Activated T-helper 2 cell treated with anti-CD3 and anti-CD28 coated beads, Interferon-gamma antibody, Interleukin-2, Interleukin-4, amounts not matched to agents 10 μg/mL and 5 μg/mL and 100 μg/mL, durations not matched to agents 14 hours and 24 hours and 36 hours (primary cell): ENCODE measurements at regions of chr1 and their contacts with region 1.

Region 1: GRCh38 chr1:46340404-46341221 is at the start of gene NSUN4:
- DNase-seq: peak; percentile 81
- H3K4me3 Mint-ChIP-seq: peak within 1 kb of the TSS; percentile 100
- H3K27ac Mint-ChIP-seq: peak within 1 kb of the TSS; percentile 99
- H3K4me1 Mint-ChIP-seq: peaks cover 32% of the 10 kb centered on the region
- H3K27me3 Mint-ChIP-seq: no peaks in the 10 kb centered on the region
- total RNA-seq, gene NSUN4: 37.2 and 37.6 TPM in 2 replicates

Region 2: DNA sequence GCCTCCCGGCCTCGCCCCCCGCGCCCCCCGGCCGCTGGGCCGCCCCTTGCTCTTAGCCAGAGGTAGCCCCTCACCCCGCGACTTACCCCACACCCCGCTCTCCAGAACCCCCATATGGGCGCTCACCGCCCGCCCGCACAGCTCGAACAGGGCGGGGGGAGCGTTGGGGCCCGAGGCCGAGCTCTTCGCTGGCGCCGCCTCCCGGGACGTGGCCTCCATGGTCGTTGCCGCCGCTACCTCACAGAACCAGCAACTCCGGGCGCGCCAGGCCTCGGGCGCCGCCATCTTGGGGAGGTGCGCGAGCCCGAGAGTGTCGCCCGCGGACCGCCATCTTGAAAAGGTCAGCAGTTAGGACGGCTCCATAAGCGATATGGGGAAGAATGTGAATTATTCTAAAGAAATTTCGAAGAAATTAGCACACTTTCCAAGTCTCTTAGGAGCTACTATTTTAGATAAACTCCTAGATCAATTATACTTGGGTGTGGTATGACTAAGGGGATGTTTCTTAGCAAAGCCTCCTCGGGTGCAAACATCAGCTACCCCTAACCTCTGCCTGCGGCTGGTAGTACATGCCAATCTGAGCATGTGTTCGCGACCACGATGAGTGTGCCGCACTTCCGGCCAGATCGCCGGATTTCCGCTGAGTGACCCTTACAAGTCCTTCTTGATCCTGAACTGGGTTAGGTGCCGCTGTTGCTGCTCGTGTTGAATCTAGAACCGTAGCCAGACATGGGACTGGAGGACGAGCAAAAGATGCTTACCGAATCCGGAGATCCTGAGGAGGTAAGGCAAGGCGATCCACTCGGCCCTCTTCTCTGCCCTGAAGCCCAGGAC is 37.4 kb before region 1 on chr1 and contains the starts of genes LRRC41 and UQCRH:
- intact Hi-C with region 1: loop called (anchors 1 kb)
- DNase-seq: peak; percentile 92
- H3K4me3 Mint-ChIP-seq: peak within 1 kb of the TSS; percentile 99
- H3K27ac Mint-ChIP-seq: peak within 1 kb of the TSS; percentile 97
- H3K4me1 Mint-ChIP-seq: peaks cover 38% of the 10 kb centered on the region
- H3K27me3 Mint-ChIP-seq: no peaks in the 10 kb centered on the region
- total RNA-seq, gene LRRC41: 70.1 and 70.6 TPM in 2 replicates
- total RNA-seq, gene UQCRH: 262 and 275 TPM in 2 replicates

Region 3: DNA sequence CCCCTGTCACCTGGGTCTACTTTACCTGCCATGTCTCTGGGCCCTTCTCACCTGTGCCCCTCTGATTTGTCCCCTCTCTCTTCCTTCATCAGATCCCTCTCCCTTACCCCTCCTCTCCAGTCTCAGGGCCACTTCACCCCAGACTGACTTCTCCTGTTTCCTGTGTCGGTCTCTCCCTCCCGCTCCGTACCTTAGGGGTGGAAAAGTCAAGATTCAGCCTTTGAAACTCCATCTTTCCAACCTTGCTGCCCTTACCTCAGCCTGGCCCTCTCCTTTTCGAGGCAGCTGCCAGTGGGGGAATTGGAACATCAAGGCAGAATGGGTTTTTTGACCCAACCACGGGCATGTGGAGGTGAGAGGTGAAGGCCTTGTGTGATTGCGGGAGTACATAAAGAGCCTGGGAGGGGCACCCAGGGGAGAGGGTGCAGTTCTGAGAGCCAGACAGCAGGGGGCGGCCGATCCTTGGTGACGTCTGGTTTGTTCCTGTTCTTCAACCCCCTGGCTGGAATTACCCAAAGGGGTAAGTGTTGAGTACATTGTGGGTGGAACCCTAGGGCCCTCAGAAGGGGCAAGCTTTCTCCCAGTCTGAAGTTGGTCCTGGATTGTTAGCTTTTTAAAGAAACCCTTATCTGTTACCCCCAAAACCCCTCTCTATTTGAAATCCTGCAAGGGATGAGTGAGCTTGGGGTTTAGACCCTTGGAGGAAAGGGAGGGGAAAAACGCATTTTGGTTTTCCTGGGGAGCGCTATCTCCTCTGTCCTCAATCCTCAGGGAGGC is 136.7 kb after region 1 on chr1:
- intact Hi-C with region 1: no loop called
- DNase-seq: peak; percentile 64
- H3K4me3 Mint-ChIP-seq: no peak overlapping the region
- H3K27ac Mint-ChIP-seq: no peak overlapping the region
- H3K4me1 Mint-ChIP-seq: no peaks in the 10 kb centered on the region
- H3K27me3 Mint-ChIP-seq: peaks cover 51% of the 10 kb centered on the region

Region 4: GRCh38 chr1:47211796-47212269 is 871.2 kb after region 1 on chr1:
- intact Hi-C with region 1: no loop called
- DNase-seq: no peak
- H3K4me3 Mint-ChIP-seq: no peak overlapping the region
- H3K27ac Mint-ChIP-seq: peak overlapping the region; percentile 58
- H3K4me1 Mint-ChIP-seq: peaks cover 1% of the 10 kb centered on the region
- H3K27me3 Mint-ChIP-seq: peaks cover 4% of the 10 kb centered on the region